Motor neuron (in vitro differentiated cells): ENCODE measurements at regions of chr17 and their contacts with region 1.

Region 1: GRCh38 chr17:64420143-64420971 is 28.6 kb upstream of the MILR1 start:
- ATAC-seq: peak; percentile 61 to 84 (median 76)
- H3K4me3 ChIP-seq: no peak overlapping the region
- H3K27ac ChIP-seq: no peak overlapping the region
- H3K4me1 ChIP-seq: no peaks in the 10 kb centered on the region

Region 2: DNA sequence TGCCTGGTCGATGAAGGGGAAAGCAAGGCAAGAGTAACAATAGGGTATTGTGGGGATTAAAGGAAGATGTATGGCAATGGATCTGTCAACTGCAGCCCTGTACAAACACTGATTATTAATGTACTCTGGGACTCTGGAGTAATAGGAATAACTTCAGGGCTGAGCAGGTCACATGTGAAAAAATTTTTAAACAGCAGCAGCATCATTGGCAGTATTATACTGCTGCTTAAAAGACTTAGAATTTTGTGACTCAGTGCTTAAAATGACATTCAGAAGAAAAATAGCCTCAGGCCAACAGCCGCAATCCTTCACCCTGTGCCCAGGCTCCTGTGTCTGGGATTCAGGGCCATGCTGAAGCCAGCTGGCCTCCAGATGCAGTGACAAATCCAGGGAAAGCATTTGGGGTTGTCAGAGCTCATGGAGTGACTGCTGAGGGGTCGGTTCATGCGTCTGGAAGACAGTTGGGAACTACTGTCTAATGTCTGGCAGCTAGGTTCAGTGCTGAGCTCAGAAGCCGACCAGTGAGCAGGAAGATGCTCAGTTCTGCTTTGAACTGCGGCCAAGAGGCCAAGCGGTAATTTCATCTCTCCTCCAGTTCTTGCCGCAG is 179.5 kb before region 1 on chr17:
- in situ Hi-C with region 1: no loop called
- ATAC-seq: peak; percentile 64 to 86 (median 74)
- H3K4me3 ChIP-seq: no peak overlapping the region
- H3K27ac ChIP-seq: peak overlapping the region in 1 of 2 donors; percentile 48
- H3K4me1 ChIP-seq: peaks cover 13 to 20% of the 10 kb centered on the region in 2 donors

Region 3: GRCh38 chr17:64306850-64307463 is 113.4 kb before region 1 on chr17:
- in situ Hi-C with region 1: loop called in 5 of 9 experiments (anchors 10 to 25 kb)
- ATAC-seq: peak in 3 of 8 experiments; percentile 39 to 76 (median 66)
- H3K4me3 ChIP-seq: no peak overlapping the region
- H3K27ac ChIP-seq: no peak overlapping the region
- H3K4me1 ChIP-seq: no peaks in the 10 kb centered on the region

Region 4: DNA sequence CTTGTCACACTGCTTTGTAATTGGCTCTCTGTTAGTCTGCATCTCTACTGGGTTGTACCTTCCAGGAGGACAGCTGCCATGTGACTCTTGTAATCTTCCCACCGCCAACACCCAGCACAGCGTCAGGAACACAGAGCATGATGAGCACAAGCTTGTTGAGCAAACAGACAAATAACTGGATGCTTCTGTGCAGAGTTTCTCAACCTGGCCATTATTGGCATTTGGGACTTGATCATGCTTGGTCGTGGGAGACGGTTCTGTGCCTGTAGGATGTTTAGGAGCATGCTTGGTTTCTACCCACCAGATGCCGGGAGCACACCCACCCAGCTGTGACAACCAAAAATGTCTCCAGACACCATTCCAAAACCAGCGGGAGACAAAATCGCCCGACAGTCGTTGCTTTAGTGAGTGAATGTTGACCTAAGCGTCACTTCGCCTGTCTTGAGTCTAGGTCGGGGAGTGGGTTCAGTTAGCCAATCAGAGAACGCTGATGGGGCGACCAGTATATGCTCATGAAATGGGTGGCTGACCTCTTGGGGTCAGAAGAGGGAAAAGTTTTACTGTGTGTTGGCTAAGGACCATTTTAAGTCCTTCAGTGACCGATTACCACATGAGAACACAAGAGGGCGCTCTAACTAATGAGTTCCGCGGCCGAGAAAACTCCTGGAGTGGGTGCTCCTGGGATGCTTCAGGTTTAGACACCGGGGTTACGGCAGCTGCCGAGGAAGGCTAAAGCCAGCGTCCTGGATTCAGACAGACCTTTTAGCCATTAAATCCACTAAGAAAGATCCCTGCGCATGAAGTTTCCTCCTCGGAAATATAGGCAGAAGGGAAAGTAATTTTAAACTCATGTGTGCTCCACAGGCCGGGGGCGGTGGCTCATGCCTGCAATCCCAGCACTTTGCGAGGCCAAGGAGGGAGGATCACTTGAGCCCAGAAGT is 99.5 kb before region 1 on chr17:
- in situ Hi-C with region 1: loop called in 6 of 9 experiments (anchors 5 to 25 kb)
- ATAC-seq: peak in 7 of 8 experiments; percentile 49 to 96 (median 65)
- H3K4me3 ChIP-seq: no peak overlapping the region
- H3K27ac ChIP-seq: no peak overlapping the region
- H3K4me1 ChIP-seq: no peaks in the 10 kb centered on the region

Region 5: GRCh38 chr17:64479650-64480049 is 59.3 kb after region 1 on chr17:
- in situ Hi-C with region 1: loop called in 1 of 9 experiments (anchors 10 kb)
- ATAC-seq: no peak
- H3K4me3 ChIP-seq: no peak overlapping the region
- H3K27ac ChIP-seq: no peak overlapping the region
- H3K4me1 ChIP-seq: no peaks in the 10 kb centered on the region

Region 6: GRCh38 chr17:64974750-64975328 is 554.5 kb after region 1 on chr17:
- in situ Hi-C with region 1: loop called in 1 of 9 experiments (anchors 25 kb)
- ATAC-seq: peak in 2 of 8 experiments; percentile 1 to 2
- H3K4me3 ChIP-seq: peak overlapping the region; percentile 38 to 67 (median 47)
- H3K27ac ChIP-seq: peak overlapping the region; percentile 64 to 82
- H3K4me1 ChIP-seq: peaks cover 5 to 12% of the 10 kb centered on the region in 2 donors